ENCODE measurements at regions of chr5 and their contacts with region 1.

Region 1: GRCh38 chr5:78647838-78648358 is 674 bp downstream of the LHFPL2 start:
- DNase-seq: no peak
- ATAC-seq: peak; percentile 52
- H3K4me3 ChIP-seq: peak overlapping the region; percentile 66
- H3K27ac ChIP-seq: no peak overlapping the region; the same call in 2 of the 3 replicates
- H3K4me1 ChIP-seq: peaks cover 9 to 19% of the 10 kb centered on the region in 2 experiments; a peak in 4 of 5 replicates
- H3K27me3 ChIP-seq: no peaks in the 10 kb centered on the region; a peak in 1 of 5 replicates
- CTCF ChIP-seq: no peak; a peak in 1 of 6 replicates
- EP300 ChIP-seq: no peak
- POLR2A ChIP-seq: no peak
- RAD21 ChIP-seq: peak in 1 of 2 experiments; percentile 5; a peak in 1 of 4 replicates

Region 2: DNA sequence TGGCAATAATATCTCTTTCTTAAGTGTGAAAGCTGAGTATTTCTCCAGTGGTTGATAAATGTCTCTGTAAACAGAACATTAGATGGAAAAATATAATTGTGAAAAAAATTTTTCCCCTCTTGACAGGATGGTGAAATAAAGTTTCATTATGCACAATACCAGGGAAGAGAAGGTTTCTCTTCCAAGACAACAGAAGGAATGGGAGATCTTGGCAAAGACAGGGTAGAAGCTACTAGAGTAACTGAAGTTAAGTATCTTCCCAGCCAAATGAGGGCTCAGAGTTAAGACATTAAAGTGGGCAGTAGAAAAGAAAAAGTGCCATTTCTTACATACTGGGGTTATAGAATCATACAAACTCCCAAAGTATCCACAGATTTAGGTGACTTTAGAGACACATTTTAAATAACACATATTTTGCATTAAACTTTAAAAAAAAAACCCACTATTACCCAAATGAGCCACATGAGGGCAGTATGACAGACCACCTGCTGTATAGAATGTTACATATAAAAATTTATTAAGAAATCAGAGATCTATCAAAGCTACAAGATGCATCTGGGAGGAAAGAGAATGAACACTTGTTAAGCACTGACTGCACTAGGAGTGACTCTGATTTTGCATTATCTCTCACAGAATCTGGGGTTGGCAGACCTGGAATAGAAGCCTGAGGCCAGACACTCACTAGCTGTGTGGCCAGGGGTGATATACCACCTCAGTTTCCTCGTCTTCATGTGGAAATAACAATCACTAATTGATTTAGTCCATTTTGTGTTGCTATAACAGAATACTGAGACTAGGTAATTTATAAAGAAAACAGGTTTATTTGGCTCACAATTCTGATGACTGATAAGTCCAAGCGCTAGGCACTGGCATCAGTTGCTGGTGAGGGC is 238.7 kb after region 1 on chr5:
- CTCF ChIA-PET with region 1: no interaction called
- POLR2A ChIA-PET with region 1: no interaction called
- in situ Hi-C with region 1: no loop called
- intact Hi-C with region 1: loop called (anchors 10 kb)
- DNase-seq: peak in 1 of 4 experiments; percentile 17
- ATAC-seq: no peak
- H3K4me3 ChIP-seq: no peak overlapping the region
- H3K27ac ChIP-seq: no peak overlapping the region
- H3K4me1 ChIP-seq: no peaks in the 10 kb centered on the region
- H3K27me3 ChIP-seq: 0 out of 5 replicates have a peak, but pooled peaks cover 0 to 3% of the 10 kb centered on the region in 2 experiments
- CTCF ChIP-seq: peak; percentile 38 to 66 (median 48); a peak in 5 of 6 replicates
- EP300 ChIP-seq: no peak
- POLR2A ChIP-seq: no peak
- RAD21 ChIP-seq: peak in 1 of 2 experiments; percentile 25; a peak in 2 of 4 replicates